PC-9 (cell line): ENCODE measurements at regions of chr5 and their contacts with region 1.

Region 1: DNA sequence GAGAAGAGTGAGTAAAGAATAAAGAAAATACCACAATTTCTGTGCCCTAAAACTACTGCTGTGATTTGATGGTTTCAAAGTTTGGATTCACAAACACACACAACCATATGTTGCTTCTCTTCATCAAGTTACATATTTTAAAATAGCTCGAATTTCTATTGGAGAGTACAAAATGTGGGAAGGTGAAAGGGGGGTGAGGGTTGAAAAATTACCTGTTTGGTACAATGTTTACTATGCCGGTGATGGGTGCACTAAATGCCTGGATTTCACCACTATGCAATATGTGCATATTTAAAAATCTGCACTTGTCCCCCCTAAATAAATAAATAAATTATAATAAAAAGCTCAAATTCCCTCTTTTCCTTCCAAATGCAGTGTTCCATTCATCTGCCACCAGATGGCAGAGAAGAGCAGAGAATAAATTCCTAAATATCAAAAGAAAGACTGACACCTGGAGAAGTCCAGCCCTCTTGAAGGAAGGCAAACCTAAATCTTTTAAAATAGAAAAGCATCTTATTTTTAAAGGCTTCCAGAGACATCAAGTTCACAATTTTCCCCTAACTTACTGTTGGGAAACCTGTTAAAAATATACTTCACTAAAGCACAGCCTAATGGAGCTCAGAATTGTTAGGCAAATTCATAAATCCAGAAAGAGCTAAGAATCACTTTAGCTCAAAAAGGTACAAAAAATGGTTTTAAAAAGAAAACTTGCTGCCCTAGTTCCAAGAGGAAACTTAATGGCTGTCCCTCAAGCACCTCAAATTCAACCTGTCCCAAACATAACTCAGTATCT is 24.8 kb upstream of the HNRNPA0 start:
- DNase-seq: no peak
- H3K4me3 ChIP-seq: no peak overlapping the region
- H3K27ac ChIP-seq: no peak overlapping the region
- H3K4me1 ChIP-seq: no peaks in the 10 kb centered on the region
- H3K27me3 ChIP-seq: no peaks in the 10 kb centered on the region
- CTCF ChIP-seq: peak; percentile 89

Region 2: DNA sequence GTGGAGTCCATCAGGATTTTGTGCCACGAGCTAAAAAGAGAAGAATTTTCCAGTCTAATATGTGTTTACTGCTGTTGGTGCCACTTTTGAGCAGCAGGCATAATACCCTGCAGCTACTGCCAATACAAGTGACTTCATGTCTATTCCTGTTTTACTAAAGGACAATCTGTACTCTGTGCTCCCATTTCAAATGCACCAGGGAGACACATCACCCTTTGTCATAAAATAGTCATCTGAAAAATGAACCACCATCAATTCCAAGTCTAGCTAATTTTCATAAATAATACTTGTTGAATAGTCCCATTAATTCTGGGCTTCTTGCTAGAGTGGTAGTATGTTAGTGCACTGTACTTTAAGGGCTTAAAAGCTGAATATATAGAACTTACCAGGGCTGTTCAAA is 101.3 kb after region 1 on chr5:
- CTCF ChIA-PET with region 1: interaction called, 12 read pairs
- POLR2A ChIA-PET with region 1: no interaction called
- intact Hi-C with region 1: loop called (anchors 10 kb)
- DNase-seq: no peak
- H3K4me3 ChIP-seq: no peak overlapping the region
- H3K27ac ChIP-seq: no peak overlapping the region
- H3K4me1 ChIP-seq: no peaks in the 10 kb centered on the region
- H3K27me3 ChIP-seq: no peaks in the 10 kb centered on the region
- CTCF ChIP-seq: no peak

Region 3: GRCh38 chr5:137923856-137924255 is 144.9 kb after region 1 on chr5:
- CTCF ChIA-PET with region 1: no interaction called
- POLR2A ChIA-PET with region 1: no interaction called
- intact Hi-C with region 1: loop called (anchors 5 kb)
- DNase-seq: no peak
- H3K4me3 ChIP-seq: no peak overlapping the region
- H3K27ac ChIP-seq: no peak overlapping the region
- H3K4me1 ChIP-seq: no peaks in the 10 kb centered on the region
- H3K27me3 ChIP-seq: no peaks in the 10 kb centered on the region
- CTCF ChIP-seq: no peak

Region 4: GRCh38 chr5:138065102-138065501 is 286.1 kb after region 1 on chr5:
- CTCF ChIA-PET with region 1: interaction called, 8 read pairs
- POLR2A ChIA-PET with region 1: no interaction called
- intact Hi-C with region 1: loop called (anchors 5 kb)
- DNase-seq: no peak
- H3K4me3 ChIP-seq: no peak overlapping the region
- H3K27ac ChIP-seq: no peak overlapping the region
- H3K4me1 ChIP-seq: no peaks in the 10 kb centered on the region
- H3K27me3 ChIP-seq: no peaks in the 10 kb centered on the region
- CTCF ChIP-seq: no peak; the same call in 1 of the 2 replicates

Region 5: DNA sequence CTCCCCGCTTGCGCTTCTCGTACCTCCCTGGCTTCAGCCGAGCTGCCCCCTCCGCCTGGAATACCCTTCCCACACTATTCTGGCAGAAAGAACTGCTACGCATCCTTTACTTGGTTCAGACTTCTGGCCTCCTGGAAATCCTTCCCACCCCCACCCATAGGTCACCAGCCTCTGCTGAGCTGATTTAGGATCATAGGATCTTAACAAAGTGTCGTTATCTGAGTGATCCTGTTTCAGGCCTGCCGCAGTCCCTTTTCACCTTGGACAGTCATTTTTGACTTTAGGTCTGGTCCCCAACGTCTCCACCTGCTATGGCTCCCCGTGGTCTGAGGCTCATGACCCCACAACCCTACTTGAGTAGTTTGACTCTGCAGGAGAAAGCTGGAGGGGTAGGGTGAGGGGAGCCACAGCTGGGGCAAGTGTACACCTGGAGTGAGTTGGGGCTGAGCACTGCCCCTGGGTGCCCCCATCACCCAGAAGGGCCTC is 713.6 kb after region 1 on chr5:
- CTCF ChIA-PET with region 1: no interaction called
- POLR2A ChIA-PET with region 1: interaction called, 48 read pairs
- intact Hi-C with region 1: no loop called
- DNase-seq: no peak
- H3K4me3 ChIP-seq: peak overlapping the region; percentile 54; the same call in 1 of the 2 replicates
- H3K27ac ChIP-seq: no peak overlapping the region
- H3K4me1 ChIP-seq: 0 out of 2 replicates have a peak, but pooled peaks cover 7% of the 10 kb centered on the region
- H3K27me3 ChIP-seq: peaks cover 32% of the 10 kb centered on the region
- CTCF ChIP-seq: no peak